Endothelial cell of umbilical vein (primary cell): ENCODE measurements at regions of chr4 and their contacts with region 1.

Region 1: GRCh38 chr4:145840162-145840768 is 98.4 kb downstream of the ZNF827 start:
- DNase-seq: peak; percentile 67
- H3K4me3 ChIP-seq: no peak overlapping the region
- H3K27ac ChIP-seq: no peak overlapping the region
- H3K4me1 ChIP-seq: peaks cover 28% of the 10 kb centered on the region
- H3K27me3 ChIP-seq: no peaks in the 10 kb centered on the region
- CTCF ChIP-seq: peak; percentile 33 to 48
- POLR2A ChIP-seq: no peak

Region 2: DNA sequence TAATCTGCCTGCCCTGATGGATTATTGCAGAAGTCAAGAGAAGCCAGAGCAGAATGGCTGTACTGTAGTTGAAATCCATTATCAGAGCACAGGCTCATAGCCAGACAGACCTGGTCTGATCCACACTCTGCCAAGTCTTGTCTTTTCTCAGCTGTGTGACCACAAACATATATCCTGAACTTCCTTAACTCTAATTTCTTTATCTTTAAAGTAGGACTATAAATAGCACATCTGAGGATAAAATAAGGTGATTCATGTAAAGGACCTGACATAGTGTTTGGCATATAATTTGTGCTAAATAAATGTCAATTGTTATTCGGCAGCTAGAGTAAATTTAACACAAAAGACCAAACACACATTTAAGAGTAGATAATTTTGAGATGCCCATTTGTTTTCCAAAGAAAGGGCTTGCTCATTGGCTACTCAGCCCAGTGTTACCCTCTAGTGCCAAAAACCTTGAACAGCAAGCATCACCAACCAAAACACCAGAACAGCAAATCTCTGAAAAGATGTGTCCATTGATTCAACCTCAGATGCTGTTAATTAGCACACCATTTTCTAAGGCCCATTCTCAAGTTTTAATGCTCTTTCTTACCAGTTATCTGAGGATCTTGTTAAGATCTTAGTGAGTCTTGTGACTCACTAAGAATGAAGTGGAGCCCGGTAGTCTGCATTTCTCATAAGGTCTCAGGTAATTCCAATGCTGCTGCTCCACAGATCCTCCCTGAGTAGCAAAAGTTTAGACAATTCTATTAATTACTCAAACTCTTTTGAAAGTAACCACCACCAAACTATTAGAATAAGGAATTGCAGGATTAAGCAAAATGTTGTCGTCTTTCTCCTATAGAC is 1085.5 kb before region 1 on chr4:
- CTCF ChIA-PET with region 1: no interaction called
- POLR2A ChIA-PET with region 1: no interaction called
- dilution Hi-C with region 1: no loop called
- intact Hi-C with region 1: no loop called
- DNase-seq: peak; percentile 73
- H3K4me3 ChIP-seq: no peak overlapping the region
- H3K27ac ChIP-seq: no peak overlapping the region
- H3K4me1 ChIP-seq: peaks cover 6% of the 10 kb centered on the region
- H3K27me3 ChIP-seq: no peaks in the 10 kb centered on the region
- CTCF ChIP-seq: peak; percentile 18 to 30
- POLR2A ChIP-seq: no peak

Region 3: GRCh38 chr4:145808021-145808650 is 32.1 kb before region 1 on chr4:
- CTCF ChIA-PET with region 1: interaction called, 11 read pairs
- POLR2A ChIA-PET with region 1: no interaction called
- dilution Hi-C with region 1: no loop called
- intact Hi-C with region 1: loop called (anchors 1 kb)
- DNase-seq: peak; percentile 93
- H3K4me3 ChIP-seq: no peak overlapping the region
- H3K27ac ChIP-seq: peak overlapping the region; percentile 82
- H3K4me1 ChIP-seq: peaks cover 44% of the 10 kb centered on the region
- H3K27me3 ChIP-seq: no peaks in the 10 kb centered on the region
- CTCF ChIP-seq: no peak
- POLR2A ChIP-seq: no peak

Region 4: DNA sequence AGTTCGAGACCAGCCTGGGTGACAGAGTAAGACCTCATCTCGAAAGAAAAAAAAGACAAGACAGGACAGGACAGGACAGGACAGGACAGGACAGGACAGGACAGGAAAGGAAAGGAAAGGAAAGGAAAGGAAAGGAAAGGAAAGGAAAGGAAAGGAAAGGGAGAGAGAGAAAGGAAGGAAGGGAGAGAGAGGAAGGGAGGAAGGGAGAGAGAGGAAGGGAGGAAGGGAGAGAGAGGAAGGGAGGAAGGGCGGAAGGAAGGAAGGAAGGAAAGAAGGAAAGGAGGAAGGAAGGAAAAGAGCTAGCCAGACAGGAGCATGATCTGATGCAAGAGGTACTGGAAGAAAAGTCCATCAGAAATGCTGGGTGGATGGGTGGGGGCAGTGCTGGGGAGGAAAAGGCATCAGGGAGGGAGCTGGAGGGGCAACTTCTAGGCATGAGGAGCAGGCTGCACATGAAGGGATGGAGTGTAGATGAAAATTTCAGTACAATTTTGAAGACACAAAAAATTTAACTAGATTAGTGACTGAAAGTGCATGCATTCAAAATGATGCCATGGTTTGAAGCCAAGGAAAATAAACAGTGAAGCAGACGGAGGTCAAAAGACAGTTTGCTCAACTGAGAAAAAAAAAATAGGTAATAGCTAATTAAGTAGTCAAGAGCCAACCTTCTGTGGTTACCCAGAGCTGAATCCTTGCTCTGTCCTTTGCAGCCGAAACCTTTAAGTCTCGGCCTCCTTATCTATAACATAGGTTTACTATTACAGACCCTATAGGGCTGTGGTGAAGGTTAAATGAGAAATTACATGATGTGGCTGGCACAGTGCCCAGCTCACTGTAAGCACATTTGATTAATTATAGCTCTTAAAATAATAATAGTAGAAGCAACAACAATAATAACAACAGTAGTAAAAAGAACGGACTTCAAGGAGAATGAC is 38.5 kb after region 1 on chr4:
- CTCF ChIA-PET with region 1: interaction called, 5 read pairs
- POLR2A ChIA-PET with region 1: no interaction called
- dilution Hi-C with region 1: no loop called
- intact Hi-C with region 1: loop called (anchors 1 kb)
- DNase-seq: peak; percentile 75
- H3K4me3 ChIP-seq: no peak overlapping the region
- H3K27ac ChIP-seq: no peak overlapping the region
- H3K4me1 ChIP-seq: peaks cover 12% of the 10 kb centered on the region
- H3K27me3 ChIP-seq: no peaks in the 10 kb centered on the region
- CTCF ChIP-seq: no peak
- POLR2A ChIP-seq: no peak

Region 5: DNA sequence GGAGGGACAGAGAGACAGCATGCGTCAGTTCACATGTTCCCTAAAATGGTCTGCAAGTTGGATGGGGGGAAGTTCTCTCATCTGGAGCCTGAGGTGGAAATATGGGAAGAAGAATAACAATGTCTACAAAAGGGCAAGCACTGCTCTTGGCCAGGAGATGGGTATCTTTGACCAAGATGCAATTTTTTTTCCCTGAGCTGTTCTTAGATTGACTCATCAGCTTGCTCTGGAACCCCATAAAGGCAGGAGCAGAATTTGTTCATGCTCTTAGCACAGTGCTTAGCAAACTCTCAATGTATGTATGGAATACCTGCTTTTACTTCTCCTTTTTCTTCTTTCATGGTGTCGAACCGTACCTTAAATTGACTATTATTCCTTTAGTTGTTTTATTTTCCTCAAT is 188.9 kb after region 1 on chr4:
- CTCF ChIA-PET with region 1: no interaction called
- POLR2A ChIA-PET with region 1: no interaction called
- dilution Hi-C with region 1: no loop called
- intact Hi-C with region 1: no loop called
- DNase-seq: no peak
- H3K4me3 ChIP-seq: no peak overlapping the region
- H3K27ac ChIP-seq: no peak overlapping the region
- H3K4me1 ChIP-seq: no peaks in the 10 kb centered on the region
- H3K27me3 ChIP-seq: no peaks in the 10 kb centered on the region
- CTCF ChIP-seq: no peak
- POLR2A ChIP-seq: no peak

Region 6: GRCh38 chr4:146049802-146050201 is 209.5 kb after region 1 on chr4:
- CTCF ChIA-PET with region 1: no interaction called
- POLR2A ChIA-PET with region 1: no interaction called
- dilution Hi-C with region 1: no loop called
- intact Hi-C with region 1: no loop called
- DNase-seq: no peak
- H3K4me3 ChIP-seq: no peak overlapping the region
- H3K27ac ChIP-seq: no peak overlapping the region
- H3K4me1 ChIP-seq: no peaks in the 10 kb centered on the region
- H3K27me3 ChIP-seq: no peaks in the 10 kb centered on the region
- CTCF ChIP-seq: no peak
- POLR2A ChIP-seq: no peak

Region 7: GRCh38 chr4:146175541-146176453 is 335.5 kb after region 1 on chr4 and contains the start of gene LSM6:
- CTCF ChIA-PET with region 1: no interaction called
- POLR2A ChIA-PET with region 1: no interaction called
- dilution Hi-C with region 1: no loop called
- intact Hi-C with region 1: loop called (anchors 2 kb)
- DNase-seq: peak; percentile 86
- H3K4me3 ChIP-seq: peak within 1 kb of the TSS; percentile 63 to 80 (median 72)
- H3K27ac ChIP-seq: peak within 1 kb of the TSS; percentile 65
- H3K4me1 ChIP-seq: peaks cover 10% of the 10 kb centered on the region
- H3K27me3 ChIP-seq: no peaks in the 10 kb centered on the region
- CTCF ChIP-seq: peak in 1 of 2 donors; percentile 1
- POLR2A ChIP-seq: peak; percentile 53
- total RNA-seq, gene LSM6: 34.7 and 43.1 TPM in 2 replicates

Region 8: DNA sequence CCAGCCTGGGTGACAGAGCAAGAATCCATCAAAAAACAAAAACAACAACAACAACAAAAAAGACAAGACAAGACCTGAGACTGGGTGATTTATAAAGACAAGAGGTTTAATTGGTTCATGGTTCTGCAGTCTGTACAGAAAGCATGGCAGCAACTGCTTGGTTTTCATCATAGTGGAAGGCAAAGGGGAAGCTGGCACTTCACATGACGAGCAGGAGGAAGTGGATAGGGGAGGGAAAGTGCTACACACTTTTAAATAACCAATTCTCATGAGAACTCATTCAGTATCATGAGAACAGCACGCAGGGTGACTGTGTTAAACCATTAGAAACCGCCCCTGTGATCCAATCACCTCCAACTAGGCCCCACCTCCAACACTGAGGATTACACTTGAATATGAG is 709.9 kb after region 1 on chr4:
- CTCF ChIA-PET with region 1: no interaction called
- POLR2A ChIA-PET with region 1: no interaction called
- dilution Hi-C with region 1: no loop called
- intact Hi-C with region 1: no loop called
- DNase-seq: no peak
- H3K4me3 ChIP-seq: no peak overlapping the region
- H3K27ac ChIP-seq: no peak overlapping the region
- H3K4me1 ChIP-seq: no peaks in the 10 kb centered on the region
- H3K27me3 ChIP-seq: peaks cover 2% of the 10 kb centered on the region in 2 experiments
- CTCF ChIP-seq: no peak
- POLR2A ChIP-seq: no peak